ENCODE measurements at regions of chr7 and their contacts with region 1.

Region 1: GRCh38 chr7:159027691-159028455 is 116.8 kb downstream of the VIPR2 start:
- DNase-seq: no peak

Region 2: GRCh38 chr7:159143780-159144757 is 116.2 kb after region 1 on chr7:
- intact Hi-C with region 1: loop called in 1 of 2 experiments (anchors 10 kb)
- DNase-seq: peak; percentile 84